ENCODE measurements at regions of chr2 and their contacts with region 1.

Region 1: GRCh38 chr2:155502766-155503165 is 804.3 kb downstream of the KCNJ3 start:
- DNase-seq: no peak
- H3K4me3 ChIP-seq: no peak overlapping the region
- H3K27ac ChIP-seq: no peak overlapping the region
- H3K4me1 ChIP-seq: no peaks in the 10 kb centered on the region
- H3K27me3 ChIP-seq: no peaks in the 10 kb centered on the region
- CTCF ChIP-seq: no peak
- POLR2A ChIP-seq: no peak

Region 2: DNA sequence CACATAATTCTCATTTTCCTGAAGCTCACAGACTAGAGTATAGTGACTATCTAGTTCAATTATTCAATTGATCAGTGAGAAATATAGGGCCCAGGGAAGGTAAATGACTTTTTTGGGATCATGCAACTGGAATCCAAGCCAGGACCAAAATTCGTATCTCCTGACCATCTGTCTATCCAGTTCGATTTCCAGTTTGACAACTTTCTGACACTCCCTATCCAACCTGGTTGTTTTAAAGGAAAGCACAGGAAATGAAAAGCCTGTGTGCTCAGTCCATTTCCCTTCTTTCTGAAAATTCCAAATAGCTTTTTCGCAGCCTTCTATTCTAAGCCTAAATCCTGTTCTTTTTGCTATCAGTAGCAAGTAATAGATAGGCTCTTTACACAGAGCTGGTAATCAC is 1897.9 kb before region 1 on chr2:
- intact Hi-C with region 1: loop called (anchors 5 kb)
- DNase-seq: no peak
- H3K4me3 ChIP-seq: no peak overlapping the region
- H3K27ac ChIP-seq: no peak overlapping the region
- H3K4me1 ChIP-seq: no peaks in the 10 kb centered on the region
- H3K27me3 ChIP-seq: no peaks in the 10 kb centered on the region
- CTCF ChIP-seq: no peak
- POLR2A ChIP-seq: no peak

Measured in vagina (tissue), 2 donors.